Esophagus muscularis mucosa (tissue), 4 donors: ENCODE measurements at regions of chr18 and their contacts with region 1.

Region 1: DNA sequence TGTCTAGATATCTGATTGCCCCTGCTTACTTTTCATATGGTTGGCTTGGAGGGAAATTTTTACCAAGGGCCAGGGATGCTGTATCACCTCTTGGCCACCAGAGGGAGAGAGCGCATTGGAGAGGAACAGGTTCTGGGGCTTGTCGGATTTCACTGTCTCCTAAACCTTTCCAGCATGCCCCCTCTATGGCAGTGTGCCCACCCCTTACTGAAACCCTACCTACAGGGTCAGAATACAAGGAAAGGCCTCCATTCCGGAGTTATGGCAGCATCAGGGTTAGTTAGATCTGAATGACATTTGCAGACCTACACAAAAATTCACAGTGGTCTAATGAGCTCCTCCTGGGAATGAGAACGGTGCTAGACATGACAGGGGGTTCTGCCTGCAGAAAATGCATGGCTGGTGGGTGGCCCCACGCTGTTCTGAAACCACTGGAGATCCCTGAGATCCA is 5.8 kb downstream of the SLC14A2 start:
- DNase-seq: no peak
- H3K4me3 ChIP-seq: no peak overlapping the region
- H3K27ac ChIP-seq: no peak overlapping the region
- H3K4me1 ChIP-seq: peaks cover 11 to 65% (median 48%) of the 10 kb centered on the region in 4 donors
- H3K27me3 ChIP-seq: no peaks in the 10 kb centered on the region
- CTCF ChIP-seq: peak in 2 of 3 experiments; percentile 94 to 95
- EP300 ChIP-seq: no peak
- POLR2A ChIP-seq: no peak

Region 2: DNA sequence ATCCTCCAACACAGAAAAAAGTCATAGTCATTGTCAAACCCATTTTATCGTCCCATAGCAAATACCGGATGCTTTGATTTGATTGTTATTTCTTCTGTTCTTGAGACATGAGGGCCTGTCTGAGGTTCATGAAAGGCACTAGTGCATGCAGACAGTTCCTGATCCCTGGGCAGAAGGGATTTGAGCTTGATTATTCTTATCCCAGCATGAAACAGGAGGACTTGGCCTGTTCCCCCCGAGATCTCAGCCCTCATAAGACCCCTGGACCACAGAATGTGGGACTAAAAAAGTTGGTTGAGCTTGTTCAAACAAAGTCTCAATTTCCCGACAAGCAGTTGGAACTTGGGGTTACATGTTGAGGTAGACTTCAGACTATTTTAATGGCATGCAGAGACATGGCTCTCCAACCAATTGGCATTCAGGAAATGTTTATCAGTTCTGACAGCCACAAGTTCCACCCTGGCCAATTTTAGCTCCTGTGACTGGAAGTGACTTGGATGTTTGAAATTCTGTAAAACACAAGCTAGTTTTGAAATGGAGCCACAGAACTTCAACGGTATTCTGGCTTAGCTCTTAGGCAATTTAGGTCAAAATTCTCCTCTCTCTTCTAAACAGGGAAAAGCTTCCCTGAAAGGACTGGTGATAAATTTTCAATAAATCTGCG is 372.7 kb before region 1 on chr18:
- intact Hi-C with region 1: loop called (anchors 10 kb)
- DNase-seq: no peak
- H3K4me3 ChIP-seq: no peak overlapping the region
- H3K27ac ChIP-seq: peak overlapping the region; percentile 81 to 85 (median 84)
- H3K4me1 ChIP-seq: peaks cover 39 to 98% (median 83%) of the 10 kb centered on the region in 4 donors
- H3K27me3 ChIP-seq: no peaks in the 10 kb centered on the region
- CTCF ChIP-seq: no peak
- EP300 ChIP-seq: peak; percentile 89
- POLR2A ChIP-seq: no peak

Region 3: DNA sequence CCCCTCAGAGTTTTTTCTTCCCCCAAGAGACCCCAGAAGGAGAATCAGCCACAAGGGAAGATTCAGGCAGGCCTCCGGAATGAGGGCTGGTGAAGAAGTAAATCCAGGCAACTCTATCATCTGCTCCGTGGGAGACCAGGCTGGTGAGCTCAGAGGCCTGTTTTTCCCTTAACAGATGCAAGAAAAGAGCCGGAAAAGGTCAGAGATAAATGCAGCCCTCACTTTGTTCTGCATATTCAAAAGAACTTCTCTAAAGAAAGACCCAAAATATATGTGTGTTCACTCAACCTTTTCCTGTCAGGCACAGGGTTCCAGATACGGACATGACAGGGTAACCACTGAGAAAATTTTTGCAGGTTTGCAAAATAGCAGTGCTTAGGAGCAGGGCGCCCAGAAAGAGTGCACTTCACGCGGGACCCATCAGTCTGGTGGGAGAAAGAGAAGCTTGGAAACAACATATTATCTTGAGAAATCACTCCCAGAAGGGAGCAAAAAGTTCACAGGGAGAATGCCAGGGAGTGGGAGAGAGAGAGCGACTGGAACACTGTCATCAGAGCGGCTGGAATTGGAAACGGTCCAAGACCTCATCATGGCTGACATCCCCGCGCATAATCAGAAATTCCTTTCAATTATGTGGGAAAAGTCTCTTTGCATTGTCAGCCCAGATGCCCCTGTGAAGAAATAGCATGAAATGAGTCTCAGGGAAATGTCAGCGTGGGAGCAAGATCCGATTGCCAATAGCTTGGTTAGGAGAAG is 250.7 kb before region 1 on chr18:
- intact Hi-C with region 1: no loop called
- DNase-seq: no peak
- H3K4me3 ChIP-seq: no peak overlapping the region
- H3K27ac ChIP-seq: no peak overlapping the region
- H3K4me1 ChIP-seq: peaks cover 0 to 3% (median 0%) of the 10 kb centered on the region in 4 donors
- H3K27me3 ChIP-seq: no peaks in the 10 kb centered on the region
- CTCF ChIP-seq: no peak
- EP300 ChIP-seq: no peak
- POLR2A ChIP-seq: no peak

Region 4: DNA sequence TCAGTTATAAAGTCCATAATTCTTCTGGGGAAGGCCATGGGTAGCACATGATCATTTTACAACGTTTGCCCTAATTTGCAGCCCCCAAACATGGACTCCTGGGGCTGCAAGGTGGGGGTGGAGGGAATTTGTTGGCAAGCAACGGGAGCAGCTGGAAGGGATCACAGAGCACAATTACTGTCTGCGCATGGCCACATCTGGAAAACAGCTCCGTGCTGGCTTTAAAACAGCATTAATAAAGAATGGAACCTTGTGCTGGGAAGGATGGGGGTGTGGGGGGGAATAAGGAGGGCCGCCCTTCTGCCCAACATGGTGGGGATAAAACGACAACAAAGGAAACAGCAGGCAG is 66.7 kb before region 1 on chr18:
- intact Hi-C with region 1: no loop called
- DNase-seq: no peak
- H3K4me3 ChIP-seq: no peak overlapping the region
- H3K27ac ChIP-seq: no peak overlapping the region
- H3K4me1 ChIP-seq: peaks cover 0 to 6% (median 2%) of the 10 kb centered on the region in 4 donors
- H3K27me3 ChIP-seq: no peaks in the 10 kb centered on the region
- CTCF ChIP-seq: no peak
- EP300 ChIP-seq: no peak
- POLR2A ChIP-seq: no peak